ENCODE measurements at regions of chr15 and their contacts with region 1.

Region 1: GRCh38 chr15:91706322-91707032 is 147.0 kb upstream of the SLCO3A1 start:
- DNase-seq: peak; percentile 84 to 87
- ATAC-seq: peak; percentile 86
- H3K4me3 ChIP-seq: no peak overlapping the region
- H3K27ac ChIP-seq: no peak overlapping the region
- H3K4me1 ChIP-seq: no peaks in the 10 kb centered on the region
- H3K27me3 ChIP-seq: no peaks in the 10 kb centered on the region

Region 2: GRCh38 chr15:91593067-91593466 is 113.4 kb before region 1 on chr15:
- intact Hi-C with region 1: no loop called
- DNase-seq: no peak
- ATAC-seq: no peak
- H3K4me3 ChIP-seq: no peak overlapping the region
- H3K27ac ChIP-seq: no peak overlapping the region
- H3K4me1 ChIP-seq: no peaks in the 10 kb centered on the region
- H3K27me3 ChIP-seq: no peaks in the 10 kb centered on the region

Region 3: GRCh38 chr15:91769894-91770293 is 63.4 kb after region 1 on chr15:
- intact Hi-C with region 1: loop called in 1 of 2 experiments (anchors 10 kb)
- DNase-seq: no peak
- ATAC-seq: no peak
- H3K4me3 ChIP-seq: no peak overlapping the region
- H3K27ac ChIP-seq: no peak overlapping the region
- H3K4me1 ChIP-seq: no peaks in the 10 kb centered on the region
- H3K27me3 ChIP-seq: no peaks in the 10 kb centered on the region

Region 4: DNA sequence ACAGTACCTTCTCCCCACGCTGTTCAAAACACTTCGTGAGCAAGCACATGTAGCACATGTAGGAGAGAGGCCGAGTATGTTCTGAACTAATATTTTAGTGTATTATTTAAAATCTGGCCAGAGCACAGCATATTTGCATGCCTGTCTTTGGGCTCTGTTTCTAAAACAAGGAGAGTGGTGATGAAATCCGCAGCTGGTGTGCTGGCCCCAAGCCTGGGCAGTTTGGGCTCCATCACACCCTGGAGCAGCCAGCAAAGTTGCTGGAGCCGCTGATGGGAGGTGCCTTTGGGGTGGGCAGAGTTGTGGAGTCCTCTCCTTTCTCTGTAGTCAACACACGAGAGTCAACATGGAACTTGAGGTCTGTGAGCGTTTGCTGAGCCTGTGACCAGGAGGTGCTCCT is 263.7 kb after region 1 on chr15:
- intact Hi-C with region 1: no loop called
- DNase-seq: peak; percentile 85 to 89
- ATAC-seq: peak; percentile 83
- H3K4me3 ChIP-seq: no peak overlapping the region
- H3K27ac ChIP-seq: peak overlapping the region in 1 of 2 donors; percentile 62
- H3K4me1 ChIP-seq: peaks cover 2 to 7% of the 10 kb centered on the region in 2 donors
- H3K27me3 ChIP-seq: no peaks in the 10 kb centered on the region

Measured in aorta (tissue), 5 donors.